Posterior cingulate gyrus (tissue), 11 donors: ENCODE measurements at regions of chr3 and their contacts with region 1.

Region 1: GRCh38 chr3:150495563-150496168 is 50.6 kb downstream of the SERP1 start:
- DNase-seq: no peak

Region 2: DNA sequence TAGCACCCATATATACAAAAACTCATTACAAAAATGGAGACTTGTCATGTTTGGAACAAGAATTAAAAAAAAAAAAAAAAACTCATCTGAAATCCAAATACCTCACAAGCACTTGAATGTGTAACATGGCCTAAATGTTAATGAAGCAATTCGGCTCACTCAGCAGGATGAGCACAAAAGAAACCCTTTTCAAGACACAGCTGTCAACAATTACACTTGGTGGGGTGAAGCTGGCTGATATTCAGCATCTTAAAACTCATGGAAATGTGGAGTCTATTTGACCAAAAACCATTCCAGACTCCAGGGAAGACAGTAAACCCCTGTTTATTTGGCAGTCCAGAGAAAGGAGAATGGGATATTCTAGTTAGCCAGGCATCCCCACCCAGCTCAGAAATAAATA is 293.0 kb before region 1 on chr3:
- intact Hi-C with region 1: no loop called
- DNase-seq: no peak

Region 3: GRCh38 chr3:150227839-150228238 is 267.8 kb before region 1 on chr3:
- intact Hi-C with region 1: loop called (anchors 1 kb)
- DNase-seq: peak in 6 of 10 donors; percentile 26 to 86 (median 54)

Region 4: GRCh38 chr3:150238998-150239619 is 256.6 kb before region 1 on chr3:
- intact Hi-C with region 1: no loop called
- DNase-seq: no peak

Region 5: GRCh38 chr3:150348500-150348899 is 147.2 kb before region 1 on chr3:
- intact Hi-C with region 1: loop called (anchors 5 kb)
- DNase-seq: no peak